MCF 10A (cell line): ENCODE measurements at regions of chr16 and their contacts with region 1.

Region 1: DNA sequence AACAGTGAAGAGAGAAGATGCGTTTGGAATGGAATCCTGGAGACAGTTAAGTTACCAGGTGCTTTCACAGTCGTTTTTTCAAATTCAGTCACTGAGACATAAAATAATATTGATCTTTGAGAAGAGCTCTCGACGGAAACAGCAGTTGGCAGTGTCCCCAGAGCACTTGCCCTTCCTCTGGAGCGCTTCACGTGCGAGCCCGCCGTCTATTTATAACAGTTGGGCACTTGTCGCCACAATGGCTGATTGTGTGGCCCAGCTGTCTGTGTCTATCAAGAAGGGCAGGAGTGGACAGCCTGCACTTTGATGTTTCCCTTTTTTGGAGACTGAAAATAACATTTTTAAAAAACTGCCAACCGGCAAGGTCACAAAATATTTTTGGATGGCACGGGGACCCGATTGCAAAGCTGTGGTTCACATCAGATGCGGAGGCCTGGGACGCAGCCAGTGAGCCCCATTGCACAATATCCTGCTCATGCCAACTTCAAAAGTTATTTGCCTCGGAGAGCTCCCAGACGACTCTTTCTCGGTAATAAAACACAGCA is 62.9 kb downstream of the ADCY9 start:
- DNase-seq: peak; percentile 83
- H3K4me3 Mint-ChIP-seq: peak overlapping the region; percentile 64
- H3K27ac Mint-ChIP-seq: peak overlapping the region; percentile 40
- H3K4me1 Mint-ChIP-seq: peaks cover 31% of the 10 kb centered on the region
- H3K27me3 Mint-ChIP-seq: no peaks in the 10 kb centered on the region
- CTCF ChIP-seq: no peak

Region 2: DNA sequence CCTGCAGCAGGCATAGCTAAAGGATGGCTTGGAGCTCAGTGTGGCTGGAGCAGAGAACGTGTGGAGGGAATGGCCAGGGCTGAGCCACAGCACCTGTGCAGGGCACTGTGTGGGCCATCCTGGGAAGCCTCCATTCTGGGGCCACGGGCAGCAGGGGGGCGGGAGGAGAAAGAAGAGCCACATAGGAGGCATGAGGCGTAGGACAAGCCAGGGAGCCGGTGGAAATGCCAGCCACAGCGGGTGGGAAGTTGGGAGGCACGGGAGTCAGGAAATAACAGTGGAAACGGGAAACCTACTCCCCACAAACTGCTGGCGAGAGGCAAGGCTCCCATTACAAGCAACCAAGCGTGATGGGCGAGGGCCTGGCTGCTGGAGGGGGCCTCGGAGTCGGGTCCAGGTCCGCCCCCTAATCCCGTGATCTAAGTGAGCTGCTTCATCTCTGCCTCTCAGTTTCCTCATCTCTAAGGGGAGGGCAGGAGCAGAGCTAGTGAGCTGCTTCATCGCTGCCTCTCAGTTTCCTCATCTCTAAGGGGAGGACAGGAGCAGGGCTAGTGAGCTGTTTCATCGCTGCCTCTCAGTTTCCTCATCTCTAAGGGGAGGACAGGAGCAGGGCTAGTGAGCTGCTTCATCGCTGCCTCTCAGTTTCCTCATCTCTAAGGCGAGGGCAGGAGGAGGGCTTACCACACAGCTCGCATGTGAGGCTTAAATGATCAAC is 42.0 kb before region 1 on chr16:
- CTCF ChIA-PET with region 1: interaction called, 3 read pairs
- POLR2A ChIA-PET with region 1: interaction called, 4 read pairs
- intact Hi-C with region 1: loop called (anchors 5 kb)
- DNase-seq: no peak
- H3K4me3 Mint-ChIP-seq: no peak overlapping the region
- H3K27ac Mint-ChIP-seq: peak overlapping the region; percentile 17
- H3K4me1 Mint-ChIP-seq: peaks cover 13% of the 10 kb centered on the region
- H3K27me3 Mint-ChIP-seq: no peaks in the 10 kb centered on the region
- CTCF ChIP-seq: no peak

Region 3: DNA sequence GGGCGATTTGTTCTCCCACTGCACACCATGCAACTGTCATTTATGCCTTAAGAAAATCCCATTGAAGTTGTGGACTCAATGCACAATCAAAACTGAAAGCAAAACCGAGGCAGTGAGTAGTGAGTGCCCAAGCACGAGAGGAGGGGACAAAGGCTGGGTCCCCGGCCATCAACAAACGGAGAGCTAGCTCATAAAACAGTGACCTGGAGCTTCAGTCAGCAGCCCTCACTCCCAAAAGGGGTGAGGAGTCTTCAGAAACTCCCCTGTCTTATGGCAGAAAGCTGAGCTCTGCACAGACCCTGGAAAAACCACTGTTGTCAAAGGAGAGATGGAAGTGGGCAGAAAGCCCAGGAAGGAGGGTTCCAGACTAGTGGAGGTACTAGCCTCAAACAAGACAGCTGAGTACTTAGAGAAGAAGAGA is 34.0 kb before region 1 on chr16:
- CTCF ChIA-PET with region 1: interaction called, 3 read pairs
- POLR2A ChIA-PET with region 1: interaction called, 15 read pairs
- intact Hi-C with region 1: loop called (anchors 5 kb)
- DNase-seq: no peak
- H3K4me3 Mint-ChIP-seq: no peak overlapping the region
- H3K27ac Mint-ChIP-seq: no peak overlapping the region
- H3K4me1 Mint-ChIP-seq: peaks cover 30% of the 10 kb centered on the region
- H3K27me3 Mint-ChIP-seq: no peaks in the 10 kb centered on the region
- CTCF ChIP-seq: no peak

Region 4: DNA sequence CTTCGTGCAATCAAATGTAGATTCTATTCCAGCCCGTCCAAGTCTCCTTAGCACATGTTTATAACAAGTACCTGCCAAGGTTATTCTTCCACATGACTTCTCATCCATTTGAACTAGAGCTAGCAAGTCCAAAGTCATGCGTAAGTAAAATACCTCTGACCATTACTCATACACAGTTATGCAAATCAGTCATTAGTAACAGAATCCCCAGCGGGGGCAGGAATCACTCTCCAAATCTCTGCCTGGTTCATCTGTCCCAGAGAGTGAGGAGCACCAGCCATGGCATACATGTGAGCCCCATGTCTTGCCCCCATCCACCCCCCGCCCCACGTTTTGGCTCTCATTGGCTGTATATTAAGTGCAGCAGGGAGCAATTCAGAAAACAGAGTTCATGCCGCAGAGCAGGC is 160.8 kb after region 1 on chr16:
- CTCF ChIA-PET with region 1: no interaction called
- POLR2A ChIA-PET with region 1: interaction called, 10 read pairs
- intact Hi-C with region 1: no loop called
- DNase-seq: peak; percentile 87
- H3K4me3 Mint-ChIP-seq: no peak overlapping the region
- H3K27ac Mint-ChIP-seq: peak overlapping the region; percentile 94
- H3K4me1 Mint-ChIP-seq: peaks cover 15% of the 10 kb centered on the region
- H3K27me3 Mint-ChIP-seq: no peaks in the 10 kb centered on the region
- CTCF ChIP-seq: no peak